K562 (cell line): ENCODE measurements at regions of chr6 and their contacts with region 1.

Region 1: DNA sequence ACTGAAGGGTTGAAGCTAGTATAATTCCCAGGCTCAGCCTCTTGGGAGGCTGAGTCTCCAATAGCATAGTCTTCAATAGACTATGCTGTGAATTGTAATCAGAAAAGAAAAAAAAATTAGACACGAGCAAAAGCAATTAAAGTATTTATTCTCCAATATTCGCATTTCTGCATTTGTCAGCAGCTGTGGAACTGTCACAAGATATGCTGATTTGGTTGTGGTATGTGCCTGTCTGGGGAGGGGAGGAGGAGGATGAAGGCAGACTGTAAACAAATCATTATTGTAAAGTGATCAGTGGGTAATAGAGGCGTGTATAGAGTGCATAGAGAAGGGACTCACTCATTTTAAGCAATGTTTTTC is 10.1 kb upstream of the BICRAL start:
- DNase-seq: no peak
- ATAC-seq: no peak
- H3K4me3 ChIP-seq: no peak overlapping the region
- H3K27ac ChIP-seq: no peak overlapping the region
- H3K4me1 ChIP-seq: peaks cover 4% of the 10 kb centered on the region in 2 experiments; a peak in 2 of 5 replicates
- H3K27me3 ChIP-seq: no peaks in the 10 kb centered on the region
- CTCF ChIP-seq: no peak
- EP300 ChIP-seq: no peak
- POLR2A ChIP-seq: no peak
- RAD21 ChIP-seq: no peak

Region 2: DNA sequence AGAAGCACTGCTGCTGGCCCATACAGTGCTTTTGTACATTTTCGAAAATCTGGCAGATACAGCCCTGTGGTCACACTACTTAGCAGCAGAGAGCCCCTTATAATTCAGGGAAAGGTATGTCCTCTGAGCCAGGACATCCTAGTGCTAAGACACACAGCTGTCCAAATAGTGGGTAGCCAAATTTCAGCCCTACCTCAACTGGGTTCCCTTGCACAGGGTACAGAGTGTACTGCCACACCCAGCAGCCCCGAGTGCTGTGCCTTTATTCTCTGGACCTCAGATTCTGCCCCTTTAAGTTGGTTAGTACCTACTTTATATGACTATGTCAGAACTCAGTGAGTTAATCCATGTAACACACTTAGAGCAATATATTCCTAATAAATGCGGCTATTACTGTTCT is 96.9 kb before region 1 on chr6:
- CTCF ChIA-PET with region 1: no interaction called
- POLR2A ChIA-PET with region 1: no interaction called
- in situ Hi-C with region 1: no loop called
- intact Hi-C with region 1: no loop called
- DNase-seq: no peak
- ATAC-seq: no peak; the same call in 1 of the 3 replicates
- H3K4me3 ChIP-seq: no peak overlapping the region
- H3K27ac ChIP-seq: no peak overlapping the region
- H3K4me1 ChIP-seq: no peaks in the 10 kb centered on the region
- H3K27me3 ChIP-seq: no peaks in the 10 kb centered on the region
- CTCF ChIP-seq: no peak
- EP300 ChIP-seq: no peak
- POLR2A ChIP-seq: no peak
- RAD21 ChIP-seq: no peak

Region 3: GRCh38 chr6:42756722-42757121 is 15.0 kb before region 1 on chr6:
- CTCF ChIA-PET with region 1: interaction called, 3 read pairs
- POLR2A ChIA-PET with region 1: interaction called, 14 read pairs
- in situ Hi-C with region 1: no loop called
- intact Hi-C with region 1: no loop called
- DNase-seq: no peak
- ATAC-seq: no peak
- H3K4me3 ChIP-seq: no peak overlapping the region
- H3K27ac ChIP-seq: no peak overlapping the region
- H3K4me1 ChIP-seq: no peaks in the 10 kb centered on the region
- H3K27me3 ChIP-seq: no peaks in the 10 kb centered on the region
- CTCF ChIP-seq: no peak
- EP300 ChIP-seq: no peak
- POLR2A ChIP-seq: no peak
- RAD21 ChIP-seq: no peak

Region 4: DNA sequence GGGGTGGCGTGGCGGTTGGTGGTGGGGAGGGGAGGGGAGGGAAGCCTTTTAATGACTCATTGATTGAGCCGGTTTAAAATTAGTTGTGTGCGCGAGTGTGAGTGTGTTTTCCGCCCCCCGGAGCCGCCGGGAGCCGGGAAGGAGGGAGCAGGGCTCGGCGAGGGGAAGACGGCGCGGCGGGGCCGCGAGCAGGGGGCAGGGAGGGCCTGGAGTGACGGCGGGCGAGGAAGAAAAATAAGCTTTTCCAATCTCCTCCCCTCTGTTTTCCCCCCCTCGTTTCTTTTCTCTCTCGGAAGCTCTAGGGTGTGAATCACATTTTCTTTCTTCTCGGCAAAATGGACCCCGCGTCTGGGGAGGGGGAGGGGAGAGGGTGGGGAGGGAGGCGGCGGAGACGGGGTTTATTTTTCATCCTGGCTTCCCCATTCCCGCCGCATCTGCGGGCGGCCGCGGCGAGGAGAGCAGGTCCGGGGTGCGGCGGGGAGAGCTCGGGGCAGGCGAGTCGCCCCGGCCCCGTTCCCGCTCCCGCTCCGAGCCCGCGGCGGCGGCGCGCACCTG is 11.0 kb after region 1 on chr6:
- CTCF ChIA-PET with region 1: no interaction called
- POLR2A ChIA-PET with region 1: interaction called, 11 read pairs
- in situ Hi-C with region 1: no loop called
- intact Hi-C with region 1: no loop called
- DNase-seq: peak; percentile 87 to 92 (median 90)
- ATAC-seq: peak; percentile 45
- H3K4me3 ChIP-seq: peak overlapping the region; percentile 77
- H3K27ac ChIP-seq: peak overlapping the region; percentile 91
- H3K4me1 ChIP-seq: peaks cover 35 to 53% of the 10 kb centered on the region in 2 experiments
- H3K27me3 ChIP-seq: no peaks in the 10 kb centered on the region
- CTCF ChIP-seq: no peak
- EP300 ChIP-seq: no peak; the same call in 1 of the 2 replicates
- POLR2A ChIP-seq: peak; percentile 86
- RAD21 ChIP-seq: no peak